CD8-positive, alpha-beta T cell (primary cell): ENCODE measurements at regions of chr12 and their contacts with region 1.

Region 1: GRCh38 chr12:121793838-121794533 is 498 bp upstream of the RHOF start:
- DNase-seq: peak; percentile 93 to 98 (median 95)
- ATAC-seq: peak; percentile 48
- H3K4me3 ChIP-seq: peak overlapping the region; percentile 93
- H3K4me3 Mint-ChIP-seq: peak overlapping the region; percentile 89
- H3K27ac ChIP-seq: peak overlapping the region; percentile 70 to 99
- H3K27ac Mint-ChIP-seq: peak overlapping the region; percentile 98
- H3K4me1 ChIP-seq: peaks cover 60% of the 10 kb centered on the region
- H3K4me1 Mint-ChIP-seq: peaks cover 66% of the 10 kb centered on the region
- H3K27me3 ChIP-seq: no peaks in the 10 kb centered on the region
- H3K27me3 Mint-ChIP-seq: no peaks in the 10 kb centered on the region
- CTCF ChIP-seq: peak; percentile 97

Region 2: DNA sequence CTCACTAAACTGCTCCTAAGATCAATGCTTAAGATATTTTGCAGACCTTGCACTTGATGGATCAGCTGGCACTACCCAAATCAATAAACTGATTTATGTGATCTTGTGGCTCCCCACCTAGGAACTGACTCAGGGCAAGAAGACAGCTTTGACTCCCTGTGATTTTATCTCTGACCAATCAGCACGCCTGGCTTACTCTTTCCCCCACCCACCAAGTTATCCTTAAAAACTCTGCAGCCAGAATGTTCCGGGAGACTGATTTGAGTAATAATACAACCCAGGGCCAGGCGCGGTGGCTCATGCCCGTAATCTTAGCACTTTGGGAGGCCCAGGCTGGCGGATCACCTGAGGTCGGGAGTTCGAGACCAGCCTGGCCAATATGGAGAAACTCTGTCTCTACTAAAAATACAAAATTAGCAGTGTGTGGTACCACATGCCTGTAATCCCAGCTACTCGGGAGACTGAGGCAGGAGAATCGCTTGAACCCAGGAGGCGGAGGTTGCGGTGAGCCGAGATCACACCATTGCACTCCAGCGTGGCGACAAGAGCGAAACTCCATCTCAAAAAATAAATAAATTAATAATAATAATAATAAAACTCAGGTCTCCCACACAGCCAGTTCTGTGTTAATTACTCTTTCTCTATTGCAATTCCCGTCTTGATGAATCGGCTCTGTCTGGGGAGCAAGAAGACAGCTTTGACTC is 136.5 kb before region 1 on chr12:
- CTCF ChIA-PET with region 1: no interaction called
- POLR2A ChIA-PET with region 1: no interaction called
- intact Hi-C with region 1: no loop called
- DNase-seq: no peak
- ATAC-seq: no peak
- H3K4me3 ChIP-seq: no peak overlapping the region
- H3K4me3 Mint-ChIP-seq: no peak overlapping the region
- H3K27ac ChIP-seq: peak overlapping the region in 1 of 2 experiments; percentile 19
- H3K27ac Mint-ChIP-seq: peak overlapping the region; percentile 97
- H3K4me1 ChIP-seq: peaks cover 43% of the 10 kb centered on the region
- H3K4me1 Mint-ChIP-seq: peaks cover 66% of the 10 kb centered on the region
- H3K27me3 ChIP-seq: no peaks in the 10 kb centered on the region
- H3K27me3 Mint-ChIP-seq: no peaks in the 10 kb centered on the region
- CTCF ChIP-seq: no peak

Region 3: DNA sequence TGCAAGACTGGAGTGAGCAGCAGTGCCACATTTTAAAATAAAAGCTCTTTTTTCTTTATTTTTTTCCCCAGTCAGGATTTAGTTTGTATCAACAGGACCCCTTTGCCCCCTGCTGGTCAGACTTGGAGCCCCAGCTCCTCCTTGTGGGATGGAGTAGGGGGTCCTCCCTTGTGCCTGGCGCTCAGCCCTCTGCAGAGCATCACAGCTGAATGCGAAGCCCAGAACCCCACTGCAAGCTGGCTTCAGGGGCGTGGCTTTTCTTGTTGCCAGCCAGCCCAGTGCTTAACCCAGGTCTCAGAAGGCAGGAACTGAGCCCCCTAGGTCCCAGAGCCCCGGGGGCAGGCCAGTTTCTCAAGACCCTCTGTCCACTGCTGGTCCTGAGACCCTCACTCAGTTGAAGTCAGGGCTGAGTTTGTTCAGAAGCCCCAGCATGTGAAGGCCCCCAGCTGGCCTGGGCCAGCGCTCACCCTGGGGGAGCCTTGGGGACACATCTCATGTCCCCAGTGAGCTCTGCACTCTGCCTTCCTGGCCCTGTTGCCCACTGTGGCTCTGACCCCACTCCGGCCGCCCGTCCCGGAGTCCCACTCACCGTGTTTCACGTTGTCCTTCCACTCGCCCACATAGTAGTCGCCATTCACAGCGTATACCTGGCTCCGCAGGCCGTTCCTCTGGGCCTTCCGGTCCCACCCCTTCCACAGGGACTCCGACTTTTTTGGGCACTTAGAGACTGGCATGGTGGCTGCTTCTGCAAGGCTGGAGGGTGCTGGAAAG is 125.1 kb before region 1 on chr12:
- CTCF ChIA-PET with region 1: interaction called, 10 read pairs
- POLR2A ChIA-PET with region 1: interaction called, 3 read pairs
- intact Hi-C with region 1: no loop called
- DNase-seq: peak in 8 of 9 experiments; percentile 45 to 77 (median 72)
- ATAC-seq: no peak
- H3K4me3 ChIP-seq: no peak overlapping the region
- H3K4me3 Mint-ChIP-seq: peak overlapping the region; percentile 37
- H3K27ac ChIP-seq: peak overlapping the region in 1 of 2 experiments; percentile 0
- H3K27ac Mint-ChIP-seq: peak overlapping the region; percentile 88
- H3K4me1 ChIP-seq: peaks cover 60% of the 10 kb centered on the region
- H3K4me1 Mint-ChIP-seq: peaks cover 61% of the 10 kb centered on the region
- H3K27me3 ChIP-seq: no peaks in the 10 kb centered on the region
- H3K27me3 Mint-ChIP-seq: no peaks in the 10 kb centered on the region
- CTCF ChIP-seq: peak; percentile 75

Region 4: GRCh38 chr12:121702957-121703356 is 91.0 kb before region 1 on chr12:
- CTCF ChIA-PET with region 1: interaction called, 26 read pairs
- POLR2A ChIA-PET with region 1: no interaction called
- intact Hi-C with region 1: no loop called
- DNase-seq: no peak
- ATAC-seq: no peak
- H3K4me3 ChIP-seq: no peak overlapping the region
- H3K4me3 Mint-ChIP-seq: no peak overlapping the region
- H3K27ac ChIP-seq: no peak overlapping the region
- H3K27ac Mint-ChIP-seq: no peak overlapping the region
- H3K4me1 ChIP-seq: no peaks in the 10 kb centered on the region
- H3K4me1 Mint-ChIP-seq: no peaks in the 10 kb centered on the region
- H3K27me3 ChIP-seq: no peaks in the 10 kb centered on the region
- H3K27me3 Mint-ChIP-seq: no peaks in the 10 kb centered on the region
- CTCF ChIP-seq: no peak

Region 5: GRCh38 chr12:121765573-121765972 is 28.4 kb before region 1 on chr12:
- CTCF ChIA-PET with region 1: interaction called, 2,042 read pairs
- POLR2A ChIA-PET with region 1: no interaction called
- intact Hi-C with region 1: no loop called
- DNase-seq: no peak
- ATAC-seq: no peak
- H3K4me3 ChIP-seq: no peak overlapping the region
- H3K4me3 Mint-ChIP-seq: no peak overlapping the region
- H3K27ac ChIP-seq: no peak overlapping the region
- H3K27ac Mint-ChIP-seq: no peak overlapping the region
- H3K4me1 ChIP-seq: no peaks in the 10 kb centered on the region
- H3K4me1 Mint-ChIP-seq: no peaks in the 10 kb centered on the region
- H3K27me3 ChIP-seq: no peaks in the 10 kb centered on the region
- H3K27me3 Mint-ChIP-seq: no peaks in the 10 kb centered on the region
- CTCF ChIP-seq: no peak

Region 6: GRCh38 chr12:121811434-121812319 is 17.7 kb after region 1 on chr12:
- CTCF ChIA-PET with region 1: interaction called, 2,042 read pairs
- POLR2A ChIA-PET with region 1: interaction called, 1,016 read pairs
- intact Hi-C with region 1: loop called (anchors 1 kb)
- DNase-seq: peak; percentile 51 to 86 (median 68)
- ATAC-seq: peak; percentile 70
- H3K4me3 ChIP-seq: peak overlapping the region; percentile 52 to 74
- H3K4me3 Mint-ChIP-seq: peak overlapping the region; percentile 83
- H3K27ac ChIP-seq: peak overlapping the region in 1 of 2 experiments; percentile 40
- H3K27ac Mint-ChIP-seq: peak overlapping the region; percentile 89
- H3K4me1 ChIP-seq: peaks cover 50% of the 10 kb centered on the region
- H3K4me1 Mint-ChIP-seq: peaks cover 57% of the 10 kb centered on the region
- H3K27me3 ChIP-seq: no peaks in the 10 kb centered on the region
- H3K27me3 Mint-ChIP-seq: no peaks in the 10 kb centered on the region
- CTCF ChIP-seq: peak; percentile 96

Region 7: GRCh38 chr12:121894633-121895032 is 100.6 kb after region 1 on chr12:
- CTCF ChIA-PET with region 1: interaction called, 39 read pairs
- POLR2A ChIA-PET with region 1: interaction called, 21 read pairs
- intact Hi-C with region 1: loop called in 1 of 2 experiments (anchors 1 kb)
- DNase-seq: peak in 2 of 9 experiments; percentile 25 to 40
- ATAC-seq: peak; percentile 31
- H3K4me3 ChIP-seq: no peak overlapping the region
- H3K4me3 Mint-ChIP-seq: no peak overlapping the region
- H3K27ac ChIP-seq: no peak overlapping the region
- H3K27ac Mint-ChIP-seq: no peak overlapping the region
- H3K4me1 ChIP-seq: peaks cover 30% of the 10 kb centered on the region
- H3K4me1 Mint-ChIP-seq: peaks cover 33% of the 10 kb centered on the region
- H3K27me3 ChIP-seq: no peaks in the 10 kb centered on the region
- H3K27me3 Mint-ChIP-seq: no peaks in the 10 kb centered on the region
- CTCF ChIP-seq: no peak

Region 8: DNA sequence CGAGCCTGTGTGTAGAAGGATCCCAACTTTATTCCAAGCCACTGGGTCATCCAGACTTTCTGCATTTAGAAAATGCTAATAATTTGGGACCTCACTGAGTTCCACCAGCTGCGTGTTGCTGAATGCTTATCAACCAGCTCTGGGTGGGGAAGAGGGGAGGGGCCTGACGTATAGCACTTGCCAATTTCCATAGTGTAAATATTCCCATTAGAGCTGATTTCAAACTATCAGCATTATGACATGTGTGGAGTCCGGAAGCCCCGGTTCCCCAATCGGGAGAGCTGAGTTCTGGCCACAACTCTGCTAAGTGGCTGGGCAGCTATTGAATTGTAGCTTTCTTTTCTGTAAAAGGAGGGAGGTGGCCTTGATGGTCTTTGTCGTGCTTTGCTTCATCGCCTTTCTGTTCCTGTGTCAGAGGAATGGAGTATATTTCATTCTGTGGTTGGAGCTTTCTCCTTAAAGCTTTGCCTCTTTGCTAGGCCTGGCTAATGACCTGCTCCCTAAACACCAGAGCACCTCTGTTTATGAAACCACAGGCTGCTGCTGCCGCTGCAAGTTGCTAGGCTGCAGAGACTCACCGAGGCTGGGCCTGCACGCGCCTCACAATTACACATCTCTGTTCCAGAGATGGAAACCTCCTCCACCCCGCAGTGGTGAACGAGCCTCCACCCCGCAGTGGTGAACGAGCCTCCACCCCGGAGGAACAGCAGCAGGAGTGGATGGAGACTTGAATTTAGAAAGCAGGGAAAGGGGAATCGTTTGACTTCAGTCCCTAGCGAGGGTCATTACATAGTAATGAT is 220.0 kb after region 1 on chr12:
- CTCF ChIA-PET with region 1: no interaction called
- POLR2A ChIA-PET with region 1: no interaction called
- intact Hi-C with region 1: no loop called
- DNase-seq: no peak
- ATAC-seq: no peak
- H3K4me3 ChIP-seq: no peak overlapping the region
- H3K4me3 Mint-ChIP-seq: no peak overlapping the region
- H3K27ac ChIP-seq: no peak overlapping the region
- H3K27ac Mint-ChIP-seq: no peak overlapping the region
- H3K4me1 ChIP-seq: no peaks in the 10 kb centered on the region
- H3K4me1 Mint-ChIP-seq: peaks cover 1% of the 10 kb centered on the region
- H3K27me3 ChIP-seq: no peaks in the 10 kb centered on the region
- H3K27me3 Mint-ChIP-seq: no peaks in the 10 kb centered on the region
- CTCF ChIP-seq: no peak